Panc1 (cell line): ENCODE measurements at regions of chr1 and their contacts with region 1.

Region 1: DNA sequence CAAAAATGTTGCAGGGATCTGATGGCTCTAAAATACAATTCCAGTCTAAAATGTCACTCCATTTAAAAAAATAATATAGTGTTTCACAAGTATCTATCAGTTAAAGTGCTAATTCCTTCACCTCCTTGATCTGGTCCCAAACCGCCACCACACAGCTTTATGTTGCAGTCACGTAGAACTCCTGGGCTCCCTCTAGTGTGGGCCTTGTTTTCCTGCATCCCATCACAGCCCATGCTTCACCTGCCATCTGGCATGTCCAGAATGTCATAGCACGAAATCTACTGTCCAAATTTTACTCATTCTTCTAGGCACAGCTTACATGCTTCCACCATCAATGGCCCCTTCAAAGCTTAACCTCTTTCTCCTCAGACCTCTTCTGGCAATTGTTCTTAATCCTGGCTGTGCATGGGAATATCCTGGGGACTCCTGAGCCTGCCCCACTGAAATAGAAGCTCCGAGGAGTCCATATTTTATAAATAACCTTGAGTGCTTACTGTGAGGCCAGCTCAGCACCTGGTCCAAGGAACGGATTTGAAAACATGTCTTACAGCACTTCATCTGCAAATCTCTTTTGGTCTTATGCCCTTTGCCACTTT is 15.5 kb downstream of the FYB2 start:
- DNase-seq: peak; percentile 32
- ATAC-seq: peak; percentile 89
- H3K4me3 ChIP-seq: no peak overlapping the region
- H3K27ac ChIP-seq: no peak overlapping the region
- H3K4me1 ChIP-seq: no peaks in the 10 kb centered on the region
- H3K27me3 ChIP-seq: no peaks in the 10 kb centered on the region; the same call in none of the 2 replicates
- CTCF ChIP-seq: peak; percentile 85

Region 2: GRCh38 chr1:55284852-55285251 is 1518.8 kb before region 1 on chr1:
- CTCF ChIA-PET with region 1: no interaction called
- POLR2A ChIA-PET with region 1: no interaction called
- in situ Hi-C with region 1: no loop called
- intact Hi-C with region 1: loop called (anchors 10 kb)
- DNase-seq: peak; percentile 39
- ATAC-seq: peak; percentile 89
- H3K4me3 ChIP-seq: no peak overlapping the region
- H3K27ac ChIP-seq: peak overlapping the region; percentile 55; the same call in 1 of the 2 replicates
- H3K4me1 ChIP-seq: peaks cover 3% of the 10 kb centered on the region
- H3K27me3 ChIP-seq: no peaks in the 10 kb centered on the region
- CTCF ChIP-seq: peak; percentile 77

Region 3: DNA sequence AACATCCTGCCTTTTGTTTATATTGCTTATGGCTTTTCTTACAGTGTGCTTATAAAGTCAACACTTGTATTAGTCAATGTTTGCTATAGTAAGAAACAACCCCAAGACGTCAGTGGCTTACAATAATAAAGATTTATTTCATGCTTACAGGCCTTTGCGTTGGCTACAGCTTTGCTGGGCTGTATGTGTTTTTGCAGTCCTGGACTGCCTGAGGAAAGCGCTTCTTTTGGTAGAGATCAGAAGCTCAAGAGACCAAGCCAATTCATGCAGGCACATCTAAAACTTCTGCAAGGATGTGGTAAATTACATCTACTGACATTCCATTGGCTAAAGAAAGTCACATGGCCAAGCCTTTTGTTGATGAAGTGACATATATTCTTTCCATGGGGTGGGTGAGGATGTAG is 176.0 kb before region 1 on chr1:
- CTCF ChIA-PET with region 1: no interaction called
- POLR2A ChIA-PET with region 1: no interaction called
- in situ Hi-C with region 1: no loop called
- intact Hi-C with region 1: no loop called
- DNase-seq: peak; percentile 90
- ATAC-seq: peak; percentile 95
- H3K4me3 ChIP-seq: peak overlapping the region in 1 of 2 experiments; percentile 3; a peak in 1 of 4 replicates
- H3K27ac ChIP-seq: no peak overlapping the region
- H3K4me1 ChIP-seq: peaks cover 9% of the 10 kb centered on the region; the same call in 1 of the 2 replicates
- H3K27me3 ChIP-seq: no peaks in the 10 kb centered on the region
- CTCF ChIP-seq: no peak

Region 4: DNA sequence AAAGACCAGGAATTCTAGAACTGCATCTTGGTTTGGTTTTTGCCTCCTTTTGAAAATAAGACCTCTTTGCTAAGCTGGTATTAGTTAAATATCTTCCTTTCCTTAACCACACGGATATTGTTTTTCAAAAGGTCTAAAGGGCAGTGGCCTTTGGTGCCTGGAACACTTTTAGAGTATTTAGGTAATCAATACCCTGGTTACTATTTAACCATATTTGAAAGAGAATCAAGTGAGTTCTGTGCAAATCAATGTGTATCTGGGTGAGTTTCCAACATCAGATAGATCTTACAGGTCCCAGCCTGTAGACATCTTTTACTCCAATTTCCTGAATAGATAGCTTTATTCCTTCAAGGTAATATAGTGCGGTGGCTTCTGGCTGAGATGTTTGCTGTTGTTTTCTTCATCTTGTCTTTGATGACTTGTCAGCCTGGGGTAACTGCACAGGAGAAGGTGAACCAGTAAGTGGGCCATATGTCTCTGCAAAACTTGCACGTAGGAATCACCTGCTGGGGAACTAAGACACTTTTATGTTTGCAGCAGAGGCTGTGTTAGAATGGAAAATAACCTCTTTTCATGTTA is 51.0 kb after region 1 on chr1 and contains the start of gene C8A:
- CTCF ChIA-PET with region 1: no interaction called
- POLR2A ChIA-PET with region 1: no interaction called
- in situ Hi-C with region 1: no loop called
- intact Hi-C with region 1: no loop called
- DNase-seq: no peak
- ATAC-seq: no peak
- H3K4me3 ChIP-seq: no peak within 1 kb of the TSS
- H3K27ac ChIP-seq: no peak within 1 kb of the TSS
- H3K4me1 ChIP-seq: no peaks in the 10 kb centered on the region
- H3K27me3 ChIP-seq: no peaks in the 10 kb centered on the region
- CTCF ChIP-seq: no peak
- total RNA-seq, gene C8A: not detected